Naive thymus-derived CD4-positive, alpha-beta T cell (primary cell): ENCODE measurements at regions of chr17 and their contacts with region 1.

Region 1: DNA sequence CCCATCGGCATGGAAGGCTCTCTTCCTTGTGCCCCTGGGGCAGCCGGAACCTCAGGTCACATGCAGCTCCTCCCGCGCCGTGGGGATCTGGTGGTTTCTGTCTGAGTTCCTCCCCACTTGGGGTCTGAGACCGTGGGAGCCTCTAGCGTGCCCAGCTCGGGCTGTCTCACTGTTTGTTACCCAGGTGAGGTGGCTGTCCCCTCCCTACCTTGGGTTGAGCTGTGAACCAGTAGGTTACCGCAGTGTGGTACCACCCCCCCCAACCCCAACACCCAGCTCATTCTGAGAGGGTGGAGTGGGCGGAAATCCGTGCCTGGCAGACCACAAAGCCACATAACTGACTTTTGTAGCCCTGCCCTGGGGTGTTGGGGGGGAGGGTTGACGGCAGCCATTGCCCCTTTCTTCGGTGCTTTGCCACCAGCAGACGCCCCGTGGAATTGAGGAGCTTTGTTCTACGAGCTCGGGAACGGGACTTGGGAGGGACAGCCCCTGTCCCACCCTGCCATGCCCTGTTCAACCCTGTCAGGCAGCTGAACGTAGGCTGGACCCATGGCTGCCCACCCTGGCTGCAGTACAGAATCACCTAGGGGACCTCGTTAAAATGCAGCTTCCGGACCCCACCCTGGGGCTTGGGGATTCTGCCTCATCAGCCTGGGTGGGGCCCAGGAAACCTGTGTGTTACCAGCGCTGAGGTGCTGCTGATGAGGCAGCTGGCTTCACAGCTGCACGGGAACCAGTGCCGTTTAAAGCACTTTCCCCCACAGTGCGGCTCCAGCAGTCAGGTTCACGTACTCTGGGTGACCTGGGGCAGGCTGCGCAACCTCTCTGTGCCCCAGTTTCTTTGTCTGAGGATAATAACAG is 18.5 kb downstream of the RAP1GAP2 start:
- DNase-seq: peak; percentile 68 to 98 (median 98)
- ATAC-seq: peak; percentile 91
- H3K4me3 ChIP-seq: peak overlapping the region; percentile 66
- H3K4me3 Mint-ChIP-seq: peak overlapping the region; percentile 56 to 84 (median 76)
- H3K27ac ChIP-seq: peak overlapping the region; percentile 52
- H3K27ac Mint-ChIP-seq: peak overlapping the region; percentile 34 to 95 (median 88)
- H3K4me1 ChIP-seq: peaks cover 20 to 21% of the 10 kb centered on the region in 2 donors
- H3K4me1 Mint-ChIP-seq: peaks cover 4 to 41% (median 35%) of the 10 kb centered on the region in 7 donors
- H3K27me3 ChIP-seq: no peaks in the 10 kb centered on the region
- H3K27me3 Mint-ChIP-seq: peaks cover 0 to 34% (median 0%) of the 10 kb centered on the region in 5 donors

Region 2: DNA sequence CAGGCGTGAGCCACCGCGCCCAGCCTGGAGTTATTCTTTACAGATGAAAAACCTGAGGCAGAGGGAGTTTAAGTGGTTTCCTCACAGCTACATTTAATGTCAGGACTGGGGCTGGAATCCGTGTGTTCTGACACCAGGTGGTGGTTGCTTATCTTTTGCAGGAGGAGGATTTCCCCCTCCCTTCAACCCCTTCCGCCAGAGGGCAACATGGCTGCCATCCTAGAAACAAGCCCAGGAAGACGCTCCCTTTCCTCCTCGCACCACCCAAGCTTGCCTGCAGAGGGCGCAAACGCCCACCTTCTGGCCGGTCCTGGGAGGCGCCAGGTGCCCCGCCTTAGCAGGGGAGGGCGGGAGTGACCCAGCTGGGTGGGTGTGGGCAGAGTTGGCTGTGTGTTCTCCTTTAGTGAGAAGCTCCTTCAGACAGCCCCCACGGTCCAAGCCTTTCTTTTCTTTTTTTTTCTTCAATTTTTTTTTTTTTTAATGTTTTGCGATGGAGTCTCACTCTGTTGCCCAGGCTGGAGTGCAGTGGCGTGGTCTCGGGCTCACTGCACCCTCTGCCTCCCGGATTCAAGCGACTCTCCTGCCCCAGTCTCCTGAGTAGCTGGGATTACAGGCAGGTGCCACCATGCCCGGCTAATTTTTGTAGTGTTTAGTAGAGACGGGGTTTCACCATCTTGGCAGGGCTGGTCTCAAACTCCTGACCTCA is 28.4 kb before region 1 on chr17:
- CTCF ChIA-PET with region 1: interaction called, 16 read pairs
- POLR2A ChIA-PET with region 1: interaction called, 24 read pairs
- intact Hi-C with region 1: loop called in 1 of 2 experiments (anchors 1 kb)
- DNase-seq: peak; percentile 79 to 93 (median 87)
- ATAC-seq: peak; percentile 99
- H3K4me3 ChIP-seq: no peak overlapping the region
- H3K4me3 Mint-ChIP-seq: peak overlapping the region in 7 of 10 donors; percentile 21 to 53 (median 42)
- H3K27ac ChIP-seq: no peak overlapping the region
- H3K27ac Mint-ChIP-seq: peak overlapping the region in 2 of 9 donors; percentile 10 to 52
- H3K4me1 ChIP-seq: peaks cover 3 to 23% of the 10 kb centered on the region in 2 donors
- H3K4me1 Mint-ChIP-seq: peaks cover 3 to 16% (median 10%) of the 10 kb centered on the region in 7 donors
- H3K27me3 ChIP-seq: no peaks in the 10 kb centered on the region
- H3K27me3 Mint-ChIP-seq: peaks cover 0 to 23% (median 0%) of the 10 kb centered on the region in 5 donors

Region 3: GRCh38 chr17:2801841-2802240 is 12.9 kb before region 1 on chr17:
- CTCF ChIA-PET with region 1: interaction called, 5 read pairs
- POLR2A ChIA-PET with region 1: interaction called, 18 read pairs
- intact Hi-C with region 1: no loop called
- DNase-seq: no peak
- ATAC-seq: no peak
- H3K4me3 ChIP-seq: no peak overlapping the region
- H3K4me3 Mint-ChIP-seq: no peak overlapping the region
- H3K27ac ChIP-seq: no peak overlapping the region
- H3K27ac Mint-ChIP-seq: peak overlapping the region in 4 of 9 donors; percentile 13 to 67 (median 32)
- H3K4me1 ChIP-seq: peaks cover 8 to 14% of the 10 kb centered on the region in 2 donors
- H3K4me1 Mint-ChIP-seq: peaks cover 28 to 54% (median 36%) of the 10 kb centered on the region in 7 donors
- H3K27me3 ChIP-seq: no peaks in the 10 kb centered on the region
- H3K27me3 Mint-ChIP-seq: no peaks in the 10 kb centered on the region

Region 4: GRCh38 chr17:2837147-2837561 is 22.4 kb after region 1 on chr17:
- CTCF ChIA-PET with region 1: interaction called, 11 read pairs
- POLR2A ChIA-PET with region 1: interaction called, 8 read pairs
- intact Hi-C with region 1: no loop called
- DNase-seq: peak in 8 of 9 donors; percentile 26 to 54 (median 42)
- ATAC-seq: peak; percentile 93
- H3K4me3 ChIP-seq: no peak overlapping the region
- H3K4me3 Mint-ChIP-seq: no peak overlapping the region
- H3K27ac ChIP-seq: no peak overlapping the region
- H3K27ac Mint-ChIP-seq: no peak overlapping the region
- H3K4me1 ChIP-seq: no peaks in the 10 kb centered on the region
- H3K4me1 Mint-ChIP-seq: peaks cover 0 to 14% (median 9%) of the 10 kb centered on the region in 7 donors
- H3K27me3 ChIP-seq: no peaks in the 10 kb centered on the region
- H3K27me3 Mint-ChIP-seq: peaks cover 0 to 3% (median 0%) of the 10 kb centered on the region in 5 donors